Kidney (tissue), 22 donors: ENCODE measurements at regions of chr14 and their contacts with region 1.

Region 1: GRCh38 chr14:32252030-32252670 is 49.1 kb upstream of the RNU6-8 start:
- DNase-seq: peak in 4 of 5 donors; percentile 54 to 87 (median 78)
- H3K4me3 ChIP-seq: no peak overlapping the region
- H3K27ac ChIP-seq: no peak overlapping the region
- H3K4me1 ChIP-seq: peaks cover 0 to 8% (median 0%) of the 10 kb centered on the region in 3 donors
- H3K27me3 ChIP-seq: no peaks in the 10 kb centered on the region
- CTCF ChIP-seq: peak; percentile 78

Region 2: GRCh38 chr14:31937721-31938346 is 314.3 kb before region 1 on chr14:
- intact Hi-C with region 1: loop called (anchors 10 kb)
- DNase-seq: peak in 1 of 5 donors; percentile 21
- H3K4me3 ChIP-seq: no peak overlapping the region
- H3K27ac ChIP-seq: no peak overlapping the region
- H3K4me1 ChIP-seq: peaks cover 0 to 7% (median 2%) of the 10 kb centered on the region in 3 donors
- H3K27me3 ChIP-seq: no peaks in the 10 kb centered on the region
- CTCF ChIP-seq: no peak